GM18951 (cell line): ENCODE measurements at regions of chr1 and their contacts with region 1.

Region 1: GRCh38 chr1:71049951-71050598 is 2.5 kb upstream of the PTGER3 start:
- POLR2A ChIP-seq: no peak

Region 2: GRCh38 chr1:70528590-70529333 is 521.3 kb before region 1 on chr1:
- in situ Hi-C with region 1: loop called (anchors 25 kb)
- POLR2A ChIP-seq: no peak

Region 3: GRCh38 chr1:70685300-70686241 is 364.5 kb before region 1 on chr1:
- in situ Hi-C with region 1: loop called (anchors 10 kb)
- POLR2A ChIP-seq: no peak

Region 4: GRCh38 chr1:71785450-71785849 is 735.4 kb after region 1 on chr1:
- in situ Hi-C with region 1: no loop called
- POLR2A ChIP-seq: no peak